Tibial artery (tissue), 4 donors: ENCODE measurements at regions of chr12 and their contacts with region 1.

Region 1: GRCh38 chr12:10212201-10213131 is at the start of gene GABARAPL1:
- DNase-seq: peak; percentile 97 to 99
- H3K4me3 ChIP-seq: peak within 1 kb of the TSS; percentile 93
- H3K27ac ChIP-seq: peak within 1 kb of the TSS; percentile 100
- H3K4me1 ChIP-seq: peaks cover 0 to 33% (median 10%) of the 10 kb centered on the region in 4 donors
- H3K27me3 ChIP-seq: no peaks in the 10 kb centered on the region
- CTCF ChIP-seq: no peak

Region 2: DNA sequence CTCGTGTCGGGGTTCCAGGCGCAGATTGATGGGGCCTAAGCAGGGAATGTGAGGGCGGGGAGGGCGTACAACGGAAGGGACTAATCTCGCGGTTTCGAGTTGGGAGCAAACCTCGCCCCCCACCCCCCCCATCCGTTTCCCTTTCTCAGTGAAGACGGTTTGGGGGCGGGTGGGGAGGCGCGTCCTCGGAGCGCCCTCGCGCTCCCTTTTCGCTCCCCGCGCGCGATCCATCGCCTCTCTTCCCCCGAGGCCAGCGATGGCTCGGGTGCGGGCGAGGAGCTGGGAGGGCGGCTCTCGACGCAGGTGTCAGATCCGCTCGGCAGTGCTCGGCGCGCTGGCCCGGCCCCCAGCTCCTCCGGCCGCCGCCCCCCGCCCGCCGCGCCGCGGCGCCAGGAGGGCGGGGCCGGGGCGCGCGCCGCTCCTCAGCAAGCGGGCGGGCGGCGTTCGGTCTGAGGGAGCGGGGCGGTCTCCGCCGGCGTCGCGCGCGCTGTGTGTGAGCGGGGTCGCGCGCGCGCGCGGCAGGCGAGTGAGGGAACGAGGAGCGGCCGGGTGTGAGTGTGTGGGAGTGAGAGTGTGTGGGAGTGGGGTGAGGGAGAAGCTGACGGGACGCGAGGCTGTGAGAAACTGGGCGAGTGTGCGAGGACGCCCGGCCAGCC is 1514.9 kb before region 1 on chr12 and contains the start of gene RIMKLB:
- intact Hi-C with region 1: loop called (anchors 10 kb)
- DNase-seq: peak; percentile 84 to 92
- H3K4me3 ChIP-seq: peak within 1 kb of the TSS; percentile 69 to 91
- H3K27ac ChIP-seq: peak within 1 kb of the TSS; percentile 97 to 100
- H3K4me1 ChIP-seq: peaks cover 0 to 35% (median 13%) of the 10 kb centered on the region in 4 donors
- H3K27me3 ChIP-seq: no peaks in the 10 kb centered on the region
- CTCF ChIP-seq: no peak

Region 3: DNA sequence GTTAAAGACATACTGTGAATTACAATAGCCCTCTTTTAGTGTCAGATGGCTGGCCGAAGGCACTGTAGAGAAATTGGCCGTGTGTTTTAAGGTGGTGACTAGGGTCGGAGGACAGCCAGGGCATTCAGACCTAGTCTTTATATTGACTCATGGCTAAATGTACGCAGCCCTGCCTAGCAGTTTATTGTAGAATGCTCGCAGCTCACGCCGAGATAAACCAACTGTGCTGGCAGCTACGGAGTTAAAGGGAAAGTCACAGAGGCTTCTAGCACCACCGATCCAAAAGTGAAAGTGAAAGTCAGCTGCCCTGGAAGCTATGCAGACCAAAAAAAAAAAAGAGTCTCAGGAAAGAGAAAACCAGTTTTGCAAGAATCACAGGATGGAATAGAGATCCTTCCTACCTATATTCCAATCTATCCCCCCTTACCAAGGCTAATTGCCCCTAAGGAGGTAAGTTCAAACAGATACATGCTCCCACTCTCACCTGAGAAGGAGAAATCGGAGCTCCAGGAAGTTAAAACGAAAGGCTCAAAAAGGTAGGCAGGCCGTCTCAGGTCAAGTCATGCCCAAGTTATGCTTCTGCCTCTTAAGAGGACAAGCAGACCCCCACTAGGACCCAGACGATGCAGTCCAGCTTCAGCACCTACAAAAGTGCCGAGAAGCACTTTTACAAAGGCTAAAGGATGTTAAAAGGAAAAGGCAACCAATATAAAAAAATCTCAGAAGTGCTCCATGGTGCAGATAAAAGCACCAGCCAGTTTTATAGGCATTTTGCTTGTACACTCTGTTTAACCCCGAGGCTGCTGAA is 152.6 kb after region 1 on chr12:
- intact Hi-C with region 1: loop called (anchors 10 kb)
- DNase-seq: peak; percentile 49 to 74
- H3K4me3 ChIP-seq: peak overlapping the region; percentile 64 to 70
- H3K27ac ChIP-seq: peak overlapping the region; percentile 83 to 91
- H3K4me1 ChIP-seq: peaks cover 0 to 40% (median 24%) of the 10 kb centered on the region in 4 donors
- H3K27me3 ChIP-seq: no peaks in the 10 kb centered on the region
- CTCF ChIP-seq: no peak

Region 4: GRCh38 chr12:10721651-10722501 is 509.4 kb after region 1 on chr12:
- intact Hi-C with region 1: loop called (anchors 5 kb)
- DNase-seq: peak; percentile 96 to 99
- H3K4me3 ChIP-seq: peak overlapping the region; percentile 71 to 98
- H3K27ac ChIP-seq: peak overlapping the region; percentile 95 to 97
- H3K4me1 ChIP-seq: peaks cover 0 to 53% (median 29%) of the 10 kb centered on the region in 4 donors
- H3K27me3 ChIP-seq: no peaks in the 10 kb centered on the region
- CTCF ChIP-seq: no peak